ENCODE measurements at regions of chr2 and their contacts with region 1.

Region 1: GRCh38 chr2:214809751-214810564 is 475 bp upstream of the BARD1 start:
- DNase-seq: peak; percentile 97
- ATAC-seq: peak; percentile 96
- H3K4me3 ChIP-seq: peak overlapping the region; percentile 99
- H3K27ac ChIP-seq: peak overlapping the region; percentile 27
- H3K4me1 ChIP-seq: peaks cover 2% of the 10 kb centered on the region; the same call in 1 of the 2 replicates
- H3K27me3 ChIP-seq: no peaks in the 10 kb centered on the region
- CTCF ChIP-seq: no peak
- POLR2A ChIP-seq: no peak
- RAD21 ChIP-seq: no peak

Region 2: GRCh38 chr2:213251618-213252017 is 1558.3 kb before region 1 on chr2:
- CTCF ChIA-PET with region 1: no interaction called
- POLR2A ChIA-PET with region 1: no interaction called
- dilution Hi-C with region 1: no loop called
- in situ Hi-C with region 1: loop called (anchors 25 kb)
- intact Hi-C with region 1: loop called (anchors 5 kb)
- DNase-seq: peak; percentile 81
- ATAC-seq: peak; percentile 92
- H3K4me3 ChIP-seq: no peak overlapping the region
- H3K27ac ChIP-seq: peak overlapping the region; percentile 18; the same call in 1 of the 2 replicates
- H3K4me1 ChIP-seq: no peaks in the 10 kb centered on the region
- H3K27me3 ChIP-seq: no peaks in the 10 kb centered on the region
- CTCF ChIP-seq: peak; percentile 74
- POLR2A ChIP-seq: no peak
- RAD21 ChIP-seq: peak; percentile 85

Region 3: DNA sequence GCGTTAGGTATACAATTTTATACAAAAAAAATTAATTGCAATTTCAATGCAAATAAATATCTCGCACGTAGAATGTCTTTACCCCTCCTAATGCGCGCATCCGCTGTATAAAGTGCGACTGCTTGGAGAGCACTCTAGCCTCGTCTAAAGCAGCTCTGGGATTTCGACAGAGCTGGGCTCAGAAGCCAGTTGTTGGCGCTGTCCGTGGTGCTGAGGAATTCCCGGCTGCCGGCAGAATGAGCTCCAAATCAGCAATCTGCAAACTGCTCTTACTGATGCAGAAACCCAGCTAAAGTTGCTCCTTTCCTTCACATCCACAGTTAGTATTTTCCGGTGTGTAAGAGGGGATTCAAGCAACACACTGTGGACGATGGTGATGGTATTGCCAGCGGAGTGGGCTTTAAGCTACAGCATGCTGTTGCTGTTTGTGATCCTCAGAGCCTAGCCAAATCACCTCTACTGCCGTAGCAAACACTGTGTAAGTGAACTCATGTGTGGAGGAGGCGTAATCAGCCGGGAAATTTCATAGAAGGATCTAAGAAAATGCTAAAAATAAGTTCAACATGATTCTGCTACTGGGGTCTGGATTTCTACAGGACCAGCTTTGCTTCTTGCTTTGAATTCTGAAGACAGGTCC is 398.9 kb before region 1 on chr2 and contains the start of gene VWC2L:
- CTCF ChIA-PET with region 1: no interaction called
- POLR2A ChIA-PET with region 1: no interaction called
- dilution Hi-C with region 1: no loop called
- in situ Hi-C with region 1: no loop called
- intact Hi-C with region 1: loop called (anchors 5 kb)
- DNase-seq: peak; percentile 76
- ATAC-seq: peak; percentile 99
- H3K4me3 ChIP-seq: no peak within 1 kb of the TSS
- H3K27ac ChIP-seq: no peak within 1 kb of the TSS
- H3K4me1 ChIP-seq: no peaks in the 10 kb centered on the region
- H3K27me3 ChIP-seq: no peaks in the 10 kb centered on the region
- CTCF ChIP-seq: no peak
- POLR2A ChIP-seq: no peak
- RAD21 ChIP-seq: peak; percentile 27; the same call in 1 of the 2 replicates
- total RNA-seq, gene VWC2L: not detected in 2 replicates

Region 4: DNA sequence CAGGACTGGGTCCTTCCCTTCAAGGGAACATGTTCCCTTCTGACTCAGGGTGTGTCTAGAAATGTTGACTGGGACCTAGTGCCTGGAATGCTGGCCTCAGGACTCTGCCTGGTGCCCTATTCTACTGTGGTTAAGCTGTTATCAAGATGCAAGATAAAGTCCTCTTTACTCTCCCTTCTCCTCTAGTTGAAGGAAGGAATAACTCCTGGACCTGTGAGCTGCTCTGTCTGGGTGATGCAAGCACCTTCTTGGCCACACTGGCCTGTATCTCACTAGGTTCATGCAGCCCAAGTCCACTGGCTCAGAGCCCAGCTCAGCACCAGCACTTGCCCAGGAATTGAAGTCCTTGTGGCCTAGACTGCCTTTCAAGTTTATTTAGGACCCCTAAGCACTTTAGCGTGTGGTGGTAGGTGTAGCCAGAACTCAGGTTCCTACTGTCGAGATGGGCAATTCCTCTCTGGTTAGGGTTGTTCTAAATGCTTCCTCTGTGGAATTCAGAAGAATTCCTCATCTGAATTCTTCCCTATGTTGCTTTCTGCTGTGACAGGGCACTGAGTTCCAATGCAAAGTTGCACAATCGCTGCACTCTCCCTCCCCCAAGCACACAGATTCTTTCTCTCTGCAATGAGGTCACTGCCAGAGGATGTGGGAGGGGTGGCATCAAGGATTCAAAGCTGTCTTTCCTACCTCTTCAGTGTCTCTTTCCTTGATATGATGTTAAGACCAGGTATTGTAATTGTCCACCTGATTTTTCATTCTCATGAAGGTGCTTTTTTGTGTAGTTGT is 344.4 kb before region 1 on chr2:
- CTCF ChIA-PET with region 1: no interaction called
- POLR2A ChIA-PET with region 1: no interaction called
- dilution Hi-C with region 1: no loop called
- in situ Hi-C with region 1: no loop called
- intact Hi-C with region 1: loop called (anchors 1 kb)
- DNase-seq: peak; percentile 62
- ATAC-seq: peak; percentile 94
- H3K4me3 ChIP-seq: no peak overlapping the region
- H3K27ac ChIP-seq: peak overlapping the region; percentile 69; the same call in 1 of the 2 replicates
- H3K4me1 ChIP-seq: peaks cover 7% of the 10 kb centered on the region
- H3K27me3 ChIP-seq: no peaks in the 10 kb centered on the region
- CTCF ChIP-seq: no peak
- POLR2A ChIP-seq: no peak
- RAD21 ChIP-seq: no peak

Region 5: DNA sequence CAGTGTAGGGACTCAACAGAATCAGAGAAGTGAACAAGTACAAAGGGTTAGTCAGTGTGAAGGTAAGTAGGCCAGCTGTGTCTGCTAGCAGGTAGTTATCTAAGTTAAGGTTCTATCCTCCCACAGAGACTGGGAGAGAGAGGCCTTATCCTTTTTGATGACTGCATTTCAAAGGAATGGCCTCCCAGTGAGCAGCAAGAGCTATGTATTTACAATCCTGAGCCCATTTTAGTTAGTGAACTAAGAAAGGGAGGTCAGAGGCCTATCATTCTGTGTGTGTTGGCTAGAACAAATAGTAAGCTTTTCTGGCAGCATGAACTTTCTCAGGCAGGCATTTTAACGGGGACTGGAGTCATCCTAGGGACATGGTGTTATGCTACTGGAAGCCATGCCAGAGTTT is 216.2 kb before region 1 on chr2:
- CTCF ChIA-PET with region 1: interaction called, 4 read pairs
- POLR2A ChIA-PET with region 1: no interaction called
- dilution Hi-C with region 1: no loop called
- in situ Hi-C with region 1: no loop called
- intact Hi-C with region 1: loop called (anchors 5 kb)
- DNase-seq: peak; percentile 93
- ATAC-seq: peak; percentile 99
- H3K4me3 ChIP-seq: no peak overlapping the region
- H3K27ac ChIP-seq: no peak overlapping the region
- H3K4me1 ChIP-seq: no peaks in the 10 kb centered on the region; the same call in 1 of the 2 replicates
- H3K27me3 ChIP-seq: no peaks in the 10 kb centered on the region
- CTCF ChIP-seq: no peak
- POLR2A ChIP-seq: no peak
- RAD21 ChIP-seq: no peak

Region 6: GRCh38 chr2:214946949-214947348 is 137.0 kb after region 1 on chr2:
- CTCF ChIA-PET with region 1: no interaction called
- POLR2A ChIA-PET with region 1: no interaction called
- dilution Hi-C with region 1: no loop called
- in situ Hi-C with region 1: no loop called
- intact Hi-C with region 1: no loop called
- DNase-seq: no peak
- ATAC-seq: no peak
- H3K4me3 ChIP-seq: no peak overlapping the region
- H3K27ac ChIP-seq: no peak overlapping the region
- H3K4me1 ChIP-seq: no peaks in the 10 kb centered on the region
- H3K27me3 ChIP-seq: no peaks in the 10 kb centered on the region
- CTCF ChIP-seq: no peak
- POLR2A ChIP-seq: no peak
- RAD21 ChIP-seq: no peak

Region 7: DNA sequence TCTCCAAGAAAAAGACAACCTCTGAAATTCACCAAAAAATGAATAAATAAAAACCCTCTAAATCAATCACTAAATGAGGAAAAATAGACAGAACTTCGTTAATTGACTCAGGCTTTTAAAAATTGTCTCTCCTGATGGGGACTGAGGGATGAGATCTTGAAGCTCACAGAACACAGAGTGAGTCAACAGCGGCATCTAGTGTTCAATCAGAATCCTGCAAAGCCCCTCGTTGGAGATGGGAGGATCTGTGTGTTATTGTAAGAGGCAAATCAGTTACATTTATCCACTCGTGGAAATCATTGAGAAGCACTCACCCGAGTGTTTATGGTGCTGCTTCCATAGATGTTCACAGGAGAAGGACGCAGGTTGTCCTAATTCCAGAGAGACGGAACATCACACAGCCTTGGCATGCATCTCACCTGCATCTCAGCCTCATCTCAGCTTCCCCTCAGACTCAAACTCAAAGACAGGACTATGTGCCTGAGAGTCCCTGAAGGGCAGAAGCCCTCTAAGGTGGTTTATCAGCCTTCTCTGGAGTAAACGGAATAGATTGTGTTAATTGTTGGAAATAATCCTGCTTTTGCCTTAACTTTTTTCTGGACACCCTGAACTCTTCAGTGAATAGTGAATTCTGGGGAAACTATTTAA is 1121.4 kb after region 1 on chr2:
- CTCF ChIA-PET with region 1: interaction called, 3 read pairs
- POLR2A ChIA-PET with region 1: no interaction called
- dilution Hi-C with region 1: no loop called
- in situ Hi-C with region 1: loop called (anchors 25 kb)
- intact Hi-C with region 1: loop called (anchors 10 kb)
- DNase-seq: peak; percentile 83
- ATAC-seq: peak; percentile 94
- H3K4me3 ChIP-seq: no peak overlapping the region
- H3K27ac ChIP-seq: no peak overlapping the region
- H3K4me1 ChIP-seq: peaks cover 8% of the 10 kb centered on the region
- H3K27me3 ChIP-seq: no peaks in the 10 kb centered on the region
- CTCF ChIP-seq: peak; percentile 97
- POLR2A ChIP-seq: peak; percentile 59; the same call in 1 of the 2 replicates
- RAD21 ChIP-seq: peak; percentile 98

Measured in IMR-90 (cell line).